ENCODE measurements at regions of chr5 and their contacts with region 1.

Region 1: DNA sequence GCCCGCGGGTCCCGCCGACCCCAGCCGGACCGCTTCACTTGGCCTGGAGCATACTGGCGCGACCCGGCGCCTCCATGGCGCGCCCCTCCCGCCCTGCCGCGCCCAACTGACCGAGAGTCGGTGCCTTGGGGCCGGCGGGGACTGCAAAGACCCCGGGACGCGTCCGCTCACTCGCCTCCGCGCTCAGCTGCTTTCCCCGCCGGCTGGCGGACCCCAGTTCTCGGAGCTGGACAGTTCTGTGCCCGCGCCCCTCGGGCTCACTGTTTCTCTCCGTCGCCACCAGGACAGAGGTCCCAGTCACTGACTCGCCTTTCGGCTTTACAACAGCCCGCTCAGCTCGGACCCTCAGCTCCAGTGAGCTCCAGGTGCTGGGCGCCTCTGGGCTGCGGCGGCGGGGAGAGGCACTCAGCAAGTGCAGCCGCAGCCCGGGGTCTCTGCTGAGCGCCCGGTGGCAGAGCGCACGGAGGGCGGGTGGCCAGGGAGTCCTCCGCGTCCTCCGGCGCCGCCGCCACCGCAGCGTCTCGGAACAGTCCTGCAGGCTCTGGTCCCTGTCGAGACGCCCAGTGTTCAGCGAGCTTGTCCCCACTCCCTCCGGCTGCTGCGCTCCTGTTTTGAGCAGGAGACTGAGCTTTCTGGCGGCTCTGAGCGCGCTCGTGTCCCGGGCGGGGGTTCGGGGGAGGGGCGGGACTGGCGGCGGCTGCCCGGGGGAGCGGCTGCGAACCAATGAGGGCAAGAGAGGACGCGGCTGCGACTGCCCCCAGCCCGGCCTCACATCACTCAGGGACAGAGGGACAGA is at the start of gene SMIM32:
- DNase-seq: peak; percentile 56
- H3K4me3 Mint-ChIP-seq: peak within 1 kb of the TSS; percentile 86
- H3K27ac Mint-ChIP-seq: no peak within 1 kb of the TSS
- H3K4me1 Mint-ChIP-seq: peaks cover 21% of the 10 kb centered on the region
- H3K27me3 Mint-ChIP-seq: peaks cover 40% of the 10 kb centered on the region
- CTCF ChIP-seq: no peak
- total RNA-seq, gene SMIM32: 0.37 and 0.42 TPM in 2 replicates

Region 2: DNA sequence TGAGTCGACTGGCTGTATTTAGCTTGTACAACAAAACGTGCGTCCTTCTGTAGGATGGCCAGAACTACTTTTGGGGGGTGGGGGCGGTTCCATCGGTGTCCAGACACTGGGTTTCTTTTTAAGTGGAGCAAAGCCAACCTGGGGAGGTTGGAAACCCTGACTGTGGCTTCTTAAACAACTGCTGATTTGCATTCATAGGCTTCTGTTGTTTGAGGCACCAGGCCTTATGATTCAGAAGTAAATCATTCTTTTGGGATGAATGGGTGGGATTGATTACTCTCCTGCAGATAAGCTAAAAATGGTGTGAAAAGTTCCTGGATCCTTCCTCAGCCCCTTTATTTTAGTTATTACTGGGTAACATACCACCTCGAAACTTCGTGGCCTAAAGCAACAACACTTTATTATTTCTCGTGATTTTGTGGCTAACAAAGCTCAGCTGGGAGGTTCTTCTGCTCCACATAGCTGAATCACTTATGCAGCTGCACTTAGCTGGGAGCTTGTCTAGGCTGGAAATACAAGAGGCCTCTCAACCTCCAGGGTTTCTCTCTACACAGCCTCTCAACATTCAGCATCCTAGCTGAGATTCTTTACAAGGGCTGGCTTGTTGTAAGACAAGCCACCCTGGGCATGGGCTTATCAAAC is 12.5 kb after region 1 on chr5:
- CTCF ChIA-PET with region 1: interaction called, 11 read pairs
- intact Hi-C with region 1: no loop called
- DNase-seq: peak; percentile 33
- H3K4me3 Mint-ChIP-seq: peak overlapping the region; percentile 17
- H3K27ac Mint-ChIP-seq: peak overlapping the region; percentile 60
- H3K4me1 Mint-ChIP-seq: peaks cover 29% of the 10 kb centered on the region
- H3K27me3 Mint-ChIP-seq: no peaks in the 10 kb centered on the region
- CTCF ChIP-seq: no peak

Measured in Calu3 (cell line).